ENCODE measurements at regions of chr1 and their contacts with region 1.

Region 1: GRCh38 chr1:184075055-184076029 is 23.8 kb downstream of the TSEN15 start:
- DNase-seq: peak in 2 of 5 donors; percentile 41 to 44
- ATAC-seq: peak; percentile 68 to 89 (median 81)
- H3K4me3 ChIP-seq: no peak overlapping the region
- H3K27ac ChIP-seq: peak overlapping the region; percentile 4 to 69 (median 55)
- H3K4me1 ChIP-seq: peaks cover 0 to 40% (median 9%) of the 10 kb centered on the region in 12 donors
- H3K27me3 ChIP-seq: no peaks in the 10 kb centered on the region
- CTCF ChIP-seq: peak; percentile 66 to 87 (median 80)
- POLR2A ChIP-seq: no peak

Region 2: DNA sequence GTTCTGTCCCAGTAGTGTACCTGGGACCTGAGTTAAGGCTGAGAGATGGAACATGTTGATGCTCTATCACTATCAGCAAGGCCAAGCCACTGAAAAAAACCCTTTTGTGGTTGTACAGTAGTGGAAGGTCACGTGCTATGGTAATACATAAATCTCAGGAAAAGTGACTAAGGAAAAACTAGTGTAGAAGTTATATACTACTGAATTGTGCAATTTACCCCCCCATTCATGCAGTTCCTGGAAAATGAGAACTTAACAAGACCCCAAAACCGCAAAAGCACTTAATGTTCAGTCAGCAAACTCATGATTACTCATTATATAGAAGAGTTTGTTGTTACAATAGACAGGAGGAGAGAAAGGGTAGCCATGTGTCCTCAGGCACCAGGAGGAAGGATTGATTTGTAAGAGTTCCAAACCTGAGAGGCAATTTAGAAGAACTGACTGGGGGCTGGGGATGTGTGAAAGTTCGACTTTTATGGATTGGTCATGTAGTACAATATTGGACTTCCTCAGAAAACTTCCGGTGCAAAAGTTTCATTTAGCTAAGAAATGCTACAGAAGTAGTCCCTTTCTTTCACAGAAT is 178.8 kb before region 1 on chr1:
- intact Hi-C with region 1: no loop called
- DNase-seq: no peak
- ATAC-seq: peak in 3 of 4 donors; percentile 32 to 42 (median 34)
- H3K4me3 ChIP-seq: no peak overlapping the region
- H3K27ac ChIP-seq: peak overlapping the region in 5 of 12 donors; percentile 0 to 81 (median 15)
- H3K4me1 ChIP-seq: peaks cover 0 to 74% (median 6%) of the 10 kb centered on the region in 12 donors
- H3K27me3 ChIP-seq: no peaks in the 10 kb centered on the region
- CTCF ChIP-seq: no peak
- POLR2A ChIP-seq: no peak

Region 3: DNA sequence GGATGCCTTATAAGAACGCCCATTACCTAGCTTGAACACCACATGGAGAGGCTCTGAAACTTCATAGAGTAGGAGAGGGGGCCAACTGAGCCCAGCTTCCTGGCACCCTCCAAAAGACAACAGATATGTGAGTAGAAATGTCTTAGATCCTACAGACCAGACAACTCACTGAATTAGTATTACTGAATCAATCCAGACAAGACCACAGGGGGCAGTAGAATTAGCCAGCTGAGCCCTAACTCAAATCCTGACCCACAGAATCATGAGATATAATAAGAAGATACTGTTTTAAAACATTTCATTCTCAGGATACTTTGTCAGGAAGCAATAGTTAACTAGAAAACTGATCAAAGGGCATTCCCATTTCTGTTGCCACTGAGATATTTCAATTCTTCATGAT is 265.6 kb after region 1 on chr1:
- intact Hi-C with region 1: loop called in 1 of 10 experiments (anchors 10 kb)
- DNase-seq: no peak
- ATAC-seq: no peak
- H3K4me3 ChIP-seq: no peak overlapping the region
- H3K27ac ChIP-seq: no peak overlapping the region
- H3K4me1 ChIP-seq: no peaks in the 10 kb centered on the region
- H3K27me3 ChIP-seq: no peaks in the 10 kb centered on the region
- CTCF ChIP-seq: peak in 2 of 12 donors; percentile 12 to 23
- POLR2A ChIP-seq: no peak

Region 4: DNA sequence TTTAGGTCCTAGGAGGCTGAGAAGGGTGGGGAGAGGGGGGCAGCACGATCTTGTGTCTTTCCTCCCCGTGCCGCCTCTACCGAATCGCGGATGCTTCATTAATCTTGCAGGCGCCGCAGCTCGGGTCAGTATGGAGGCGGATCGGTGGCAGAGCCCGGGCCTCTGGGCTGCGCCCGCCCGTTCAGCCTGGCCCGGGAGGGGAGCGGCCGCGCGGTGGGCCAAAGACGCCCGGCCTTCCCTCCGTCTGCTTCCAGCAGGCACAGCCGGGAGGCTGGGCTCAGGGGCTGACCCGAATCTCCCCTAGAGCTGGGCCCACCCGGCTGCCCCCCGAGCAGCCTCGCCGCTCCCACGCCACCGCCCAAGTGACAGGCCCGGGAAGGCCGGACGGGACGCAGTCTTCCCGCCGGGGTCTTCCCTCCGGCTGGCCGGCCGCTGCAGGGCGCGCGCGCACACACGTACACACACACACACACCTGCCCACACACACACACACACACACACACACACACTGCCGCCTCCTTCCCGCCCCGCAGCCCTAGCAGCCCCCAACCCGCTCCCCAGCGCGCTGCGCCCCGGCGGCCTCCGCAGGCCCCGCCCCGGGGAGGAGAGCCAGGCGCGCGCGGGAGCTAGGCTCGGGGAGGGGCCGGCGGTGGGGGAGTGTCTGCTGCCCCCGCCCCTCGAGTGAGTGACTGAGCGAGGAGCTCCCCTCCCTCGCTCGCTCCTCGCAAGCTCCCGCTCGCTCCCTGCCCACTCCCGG is 311.1 kb after region 1 on chr1 and contains the start of gene C1orf21:
- intact Hi-C with region 1: loop called in 2 of 10 experiments (anchors 10 kb)
- DNase-seq: peak; percentile 93 to 94 (median 93)
- ATAC-seq: peak; percentile 91 to 97 (median 95)
- H3K4me3 ChIP-seq: peak within 1 kb of the TSS; percentile 85 to 99 (median 94)
- H3K27ac ChIP-seq: peak within 1 kb of the TSS; percentile 84 to 97 (median 92)
- H3K4me1 ChIP-seq: peaks cover 0 to 38% (median 29%) of the 10 kb centered on the region in 12 donors
- H3K27me3 ChIP-seq: no peaks in the 10 kb centered on the region
- CTCF ChIP-seq: no peak
- POLR2A ChIP-seq: peak; percentile 80 to 94
- total RNA-seq, gene C1orf21: 57.5 to 81.3 (median 69.2) TPM

Region 5: DNA sequence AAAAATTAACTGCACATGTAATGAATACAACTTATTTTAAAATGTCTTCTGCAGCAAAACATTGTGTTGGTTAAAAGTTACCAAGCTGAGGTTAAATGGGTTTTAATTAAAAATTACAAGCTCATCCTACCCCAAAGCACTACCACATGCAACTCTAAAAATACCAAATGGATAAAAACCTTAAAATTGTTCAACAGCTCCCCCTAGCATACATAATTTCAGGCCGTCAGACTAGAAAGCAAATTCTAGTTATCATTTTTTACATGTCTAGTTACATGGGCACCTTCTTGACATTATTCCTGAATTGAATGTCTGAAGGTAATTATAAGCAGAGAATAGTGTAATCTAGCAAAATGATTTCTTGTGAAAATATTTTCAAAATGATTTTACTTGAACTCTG is 488.0 kb after region 1 on chr1:
- intact Hi-C with region 1: loop called (anchors 5 to 10 kb)
- DNase-seq: no peak
- ATAC-seq: peak in 3 of 4 donors; percentile 26 to 63 (median 53)
- H3K4me3 ChIP-seq: no peak overlapping the region
- H3K27ac ChIP-seq: peak overlapping the region in 9 of 12 donors; percentile 15 to 73 (median 56)
- H3K4me1 ChIP-seq: peaks cover 0 to 38% (median 30%) of the 10 kb centered on the region in 12 donors
- H3K27me3 ChIP-seq: no peaks in the 10 kb centered on the region
- CTCF ChIP-seq: peak; percentile 16 to 77 (median 62)
- POLR2A ChIP-seq: no peak

Region 6: GRCh38 chr1:184691719-184692324 is 616.5 kb after region 1 on chr1:
- intact Hi-C with region 1: loop called in 7 of 10 experiments (anchors 5 to 10 kb)
- DNase-seq: no peak
- ATAC-seq: peak in 2 of 4 donors; percentile 52 to 68
- H3K4me3 ChIP-seq: no peak overlapping the region
- H3K27ac ChIP-seq: no peak overlapping the region
- H3K4me1 ChIP-seq: peaks cover 0 to 3% (median 0%) of the 10 kb centered on the region in 12 donors
- H3K27me3 ChIP-seq: no peaks in the 10 kb centered on the region
- CTCF ChIP-seq: peak; percentile 55 to 87 (median 78)
- POLR2A ChIP-seq: no peak

Measured in heart left ventricle (tissue), 16 donors.